ENCODE measurements at regions of chr5 and their contacts with region 1.

Region 1: DNA sequence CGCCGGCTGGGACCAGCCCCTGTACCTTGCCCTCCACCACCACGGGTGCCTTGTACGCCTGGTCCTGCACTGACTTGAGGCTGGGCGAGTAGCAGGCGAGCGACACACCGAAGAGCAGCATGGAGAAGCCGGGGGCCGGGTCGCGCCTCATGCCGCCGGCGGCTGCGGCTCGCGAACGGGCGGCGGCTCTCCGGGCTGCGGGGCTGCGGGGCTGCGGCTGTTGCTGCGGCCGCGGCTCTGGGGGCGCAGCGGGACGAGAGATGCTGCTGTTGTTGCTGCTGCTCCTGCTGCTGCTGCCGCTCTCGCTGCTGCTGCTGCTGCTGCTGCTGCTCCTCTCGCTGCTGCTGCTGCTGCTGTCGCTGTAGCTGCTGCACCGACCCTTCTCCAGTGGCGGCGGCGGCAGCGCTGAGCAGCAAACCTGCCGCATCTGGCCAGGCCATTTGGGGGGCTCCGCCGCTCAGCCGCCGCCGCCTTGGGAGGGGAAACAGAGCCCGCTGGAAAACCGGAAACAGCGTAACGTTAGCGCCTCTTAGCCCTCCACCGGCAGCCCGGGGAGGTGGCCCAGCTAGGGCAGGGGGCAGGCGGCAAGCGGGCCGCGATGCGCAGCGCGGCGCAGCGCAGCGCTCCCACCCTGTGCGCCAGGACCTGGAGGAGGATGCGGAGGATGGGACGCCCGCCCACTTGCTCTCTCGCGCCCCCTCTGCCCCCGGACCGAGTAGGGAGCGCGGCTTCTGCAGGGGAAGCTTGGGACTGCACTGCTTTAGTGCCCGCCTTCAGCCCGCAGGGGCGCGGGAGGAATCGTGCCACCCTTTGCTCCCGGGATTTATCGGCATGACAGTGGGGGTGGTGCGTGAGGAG is at the start of gene NRG2:
- DNase-seq: peak; percentile 76
- H3K4me3 Mint-ChIP-seq: peak within 1 kb of the TSS; percentile 83
- H3K27ac Mint-ChIP-seq: no peak within 1 kb of the TSS
- H3K4me1 Mint-ChIP-seq: peaks cover 30% of the 10 kb centered on the region
- H3K27me3 Mint-ChIP-seq: peaks cover 28% of the 10 kb centered on the region
- CTCF ChIP-seq: peak; percentile 61
- total RNA-seq, gene NRG2: 1.4 and 3.1 TPM in 2 replicates

Region 2: DNA sequence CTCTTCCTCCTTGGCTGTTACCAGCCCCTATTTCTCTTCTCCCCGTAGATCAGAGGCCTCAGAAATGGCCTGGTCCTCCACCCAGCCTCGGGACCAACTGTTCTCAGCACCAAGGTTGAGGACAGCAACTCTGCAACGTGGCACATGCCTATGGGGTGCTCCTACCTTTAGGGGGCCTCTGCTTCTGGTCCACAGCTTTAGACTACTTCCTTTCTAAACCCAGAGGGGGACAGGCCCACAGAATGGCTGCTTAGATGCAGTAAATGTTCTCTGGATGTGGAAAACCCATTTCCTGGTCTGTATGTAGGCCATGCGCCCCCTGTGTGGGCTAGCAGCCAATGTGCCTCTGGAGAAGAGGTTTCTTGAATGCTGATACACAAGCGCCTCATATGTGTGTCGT is 68.2 kb before region 1 on chr5:
- CTCF ChIA-PET with region 1: no interaction called
- intact Hi-C with region 1: loop called (anchors 5 kb)
- DNase-seq: no peak
- H3K4me3 Mint-ChIP-seq: no peak overlapping the region
- H3K27ac Mint-ChIP-seq: no peak overlapping the region
- H3K4me1 Mint-ChIP-seq: no peaks in the 10 kb centered on the region
- H3K27me3 Mint-ChIP-seq: peaks cover 81% of the 10 kb centered on the region
- CTCF ChIP-seq: no peak

Region 3: DNA sequence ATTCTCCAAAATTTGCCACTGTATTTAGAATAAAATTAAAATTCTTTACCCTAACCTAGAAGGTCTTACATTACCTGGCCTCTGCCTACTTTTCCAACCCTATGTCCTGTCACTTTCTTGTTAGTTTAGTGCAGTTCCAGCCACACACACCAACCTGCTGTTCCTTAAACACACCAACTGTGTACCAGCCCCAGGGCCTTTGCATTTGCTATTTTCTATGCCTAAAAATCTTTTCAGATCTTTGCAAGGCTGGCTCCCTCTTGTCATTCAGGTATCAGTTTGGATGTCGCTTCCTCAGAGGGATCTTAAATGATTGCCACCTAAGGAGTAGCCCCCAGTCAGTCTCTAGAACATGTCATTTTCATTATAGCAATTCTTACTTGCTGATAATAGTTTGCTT is 17.9 kb after region 1 on chr5:
- CTCF ChIA-PET with region 1: no interaction called
- intact Hi-C with region 1: no loop called
- DNase-seq: no peak
- H3K4me3 Mint-ChIP-seq: no peak overlapping the region
- H3K27ac Mint-ChIP-seq: no peak overlapping the region
- H3K4me1 Mint-ChIP-seq: no peaks in the 10 kb centered on the region
- H3K27me3 Mint-ChIP-seq: peaks cover 25% of the 10 kb centered on the region
- CTCF ChIP-seq: no peak

Region 4: DNA sequence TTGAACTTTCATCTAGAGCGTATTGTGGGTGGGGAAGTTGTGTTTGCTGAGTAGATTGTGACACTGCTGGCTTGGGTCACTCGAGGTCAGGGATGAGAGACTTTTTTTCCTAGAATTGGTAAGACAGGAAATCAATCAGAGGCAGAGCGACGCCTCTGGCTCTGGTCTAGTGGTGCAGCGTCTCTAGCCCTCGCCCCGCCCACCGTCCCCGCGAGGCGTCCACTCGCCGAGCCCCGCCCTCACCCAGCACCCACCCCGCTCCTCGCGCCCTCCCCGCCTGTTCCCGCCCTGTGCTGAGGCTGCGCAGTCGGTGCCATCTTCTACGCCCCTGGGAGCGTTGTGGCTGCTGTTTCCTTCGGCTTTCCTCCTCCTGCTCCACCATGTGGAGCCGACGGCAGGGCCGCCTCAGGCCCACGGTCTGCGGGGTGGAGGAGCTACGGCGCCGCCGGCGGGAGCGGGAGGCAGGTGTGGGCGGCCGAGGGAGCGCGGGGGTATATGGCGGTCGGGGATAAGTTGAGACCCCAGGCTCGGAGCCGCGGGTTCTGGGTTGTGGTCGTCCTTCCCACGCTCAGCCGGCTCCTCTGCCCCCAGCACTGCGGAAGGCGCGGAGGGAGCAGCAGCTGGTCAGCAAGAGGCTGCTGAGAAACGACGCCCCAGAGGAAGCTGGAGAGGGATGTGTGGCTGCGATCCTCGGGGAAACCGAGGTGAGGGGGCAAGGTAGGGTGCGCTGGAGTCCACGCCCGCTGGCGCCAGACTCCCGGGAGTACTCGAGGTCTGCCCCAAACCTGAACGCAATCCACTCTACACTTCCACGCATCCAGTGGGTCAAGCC is 596.5 kb after region 1 on chr5 and contains the start of gene TMCO6:
- CTCF ChIA-PET with region 1: no interaction called
- intact Hi-C with region 1: no loop called
- DNase-seq: peak; percentile 99
- H3K4me3 Mint-ChIP-seq: peak within 1 kb of the TSS; percentile 96
- H3K27ac Mint-ChIP-seq: peak within 1 kb of the TSS; percentile 90
- H3K4me1 Mint-ChIP-seq: peaks cover 35% of the 10 kb centered on the region
- H3K27me3 Mint-ChIP-seq: no peaks in the 10 kb centered on the region
- CTCF ChIP-seq: peak; percentile 72
- total RNA-seq, gene TMCO6: 28.5 and 30.9 TPM in 2 replicates

Measured in Calu3 (cell line).